ENCODE measurements at regions of chr2 and their contacts with region 1.

Region 1: GRCh38 chr2:240861554-240861953 is 7.1 kb upstream of the AGXT start:
- DNase-seq: no peak
- H3K4me3 Mint-ChIP-seq: no peak overlapping the region
- H3K27ac Mint-ChIP-seq: no peak overlapping the region
- H3K4me1 Mint-ChIP-seq: no peaks in the 10 kb centered on the region
- H3K27me3 Mint-ChIP-seq: no peaks in the 10 kb centered on the region

Region 2: DNA sequence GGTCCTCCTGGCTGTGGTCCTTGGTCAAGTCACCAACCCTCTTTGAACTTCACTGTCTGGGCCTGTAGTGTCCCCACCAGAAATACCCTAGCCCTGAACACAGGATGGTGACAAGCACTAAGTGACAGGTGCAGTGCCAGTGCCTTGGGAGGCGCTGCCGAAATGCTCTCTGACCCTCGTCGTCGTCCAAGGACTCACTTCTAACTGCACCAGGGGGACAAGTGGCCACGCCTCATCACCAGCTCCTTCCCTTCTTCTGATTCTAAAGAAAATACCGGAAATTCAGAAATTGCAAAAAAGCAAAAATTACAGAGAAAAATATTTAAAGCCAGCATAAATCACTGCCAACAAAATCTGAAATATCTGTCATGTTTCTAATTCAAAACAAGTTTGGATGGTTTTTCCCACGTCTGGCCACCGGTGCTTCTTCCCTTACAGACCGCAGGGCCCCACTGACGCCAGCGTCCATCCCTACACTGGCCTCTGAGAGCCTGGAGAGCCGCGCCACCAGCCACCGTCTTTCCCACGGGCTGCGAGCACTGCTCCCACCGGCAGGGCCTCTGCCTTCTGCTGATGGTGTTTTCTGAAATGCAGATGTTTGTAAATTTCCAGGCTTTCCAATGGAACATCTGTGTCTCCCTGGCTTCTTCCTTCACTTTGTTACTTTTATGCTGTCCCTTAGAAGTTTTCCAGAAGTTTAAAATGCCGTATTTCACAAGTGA is 463.5 kb before region 1 on chr2:
- CTCF ChIA-PET with region 1: no interaction called
- intact Hi-C with region 1: no loop called
- DNase-seq: no peak
- H3K4me3 Mint-ChIP-seq: no peak overlapping the region
- H3K27ac Mint-ChIP-seq: no peak overlapping the region
- H3K4me1 Mint-ChIP-seq: peaks cover 9% of the 10 kb centered on the region
- H3K27me3 Mint-ChIP-seq: no peaks in the 10 kb centered on the region

Region 3: DNA sequence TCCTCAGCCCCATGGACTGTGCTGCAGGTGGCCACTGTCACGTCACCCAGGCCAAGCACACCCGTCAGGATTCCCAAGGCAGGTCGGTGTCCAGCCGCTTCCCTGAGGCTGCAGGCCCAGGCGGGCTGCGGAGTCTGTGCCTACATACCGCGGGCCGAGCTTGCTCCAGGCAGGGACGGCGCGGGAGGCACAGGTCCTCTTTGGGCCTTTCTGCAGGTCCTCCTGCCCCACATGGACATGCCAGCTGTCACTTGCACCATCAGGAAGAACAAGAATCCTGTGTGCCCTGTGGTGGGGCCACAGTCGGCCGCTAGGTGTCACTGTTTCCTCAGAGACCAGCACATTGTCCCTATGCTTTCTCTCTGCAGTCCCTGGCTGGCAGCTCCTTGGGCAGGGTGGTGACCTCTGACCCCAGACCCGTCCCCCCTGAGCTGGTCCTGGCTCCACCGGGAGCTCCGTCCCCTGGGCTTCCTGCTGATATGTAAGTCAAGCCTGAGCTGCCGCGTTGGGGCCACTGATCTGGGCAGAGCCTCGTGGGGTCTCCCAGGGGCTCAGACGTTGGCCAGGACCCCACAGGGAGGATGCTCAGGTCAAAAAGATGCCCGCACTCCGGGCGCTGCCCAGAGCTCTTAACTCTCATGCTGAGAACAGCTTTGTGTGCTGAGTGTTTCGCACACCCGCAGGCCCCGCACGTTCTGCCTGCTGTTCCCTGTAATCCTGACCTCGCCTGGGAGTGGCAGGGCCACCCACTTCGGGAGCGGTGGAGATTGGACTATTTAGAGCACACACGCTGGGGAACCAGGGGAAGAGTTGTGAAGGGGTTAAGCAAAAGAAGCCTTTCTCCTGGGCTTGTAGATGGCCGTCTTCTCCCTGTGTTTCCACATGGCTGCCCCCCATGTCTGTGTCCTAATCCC is 10.2 kb before region 1 on chr2:
- CTCF ChIA-PET with region 1: interaction called, 17 read pairs
- intact Hi-C with region 1: no loop called
- DNase-seq: peak; percentile 92
- H3K4me3 Mint-ChIP-seq: no peak overlapping the region
- H3K27ac Mint-ChIP-seq: no peak overlapping the region
- H3K4me1 Mint-ChIP-seq: no peaks in the 10 kb centered on the region
- H3K27me3 Mint-ChIP-seq: no peaks in the 10 kb centered on the region

Measured in activated naive CD4-positive, alpha-beta T cell treated with anti-CD3 and anti-CD28 coated beads for 36 hours (primary cell).